ENCODE measurements at regions of chr1 and their contacts with region 1.

Region 1: GRCh38 chr1:212035123-212035834 is at the starts of genes DTL and INTS7:
- DNase-seq: peak; percentile 100
- ATAC-seq: peak; percentile 87
- H3K4me3 Mint-ChIP-seq: peak within 1 kb of the TSS; percentile 98
- H3K27ac Mint-ChIP-seq: peak within 1 kb of the TSS; percentile 99
- H3K4me1 Mint-ChIP-seq: peaks cover 56% of the 10 kb centered on the region
- H3K27me3 Mint-ChIP-seq: no peaks in the 10 kb centered on the region
- total RNA-seq, gene DTL: 74.1 to 77.5 TPM
- total RNA-seq, gene INTS7: 31.8 to 32.1 TPM

Region 2: GRCh38 chr1:211680752-211681327 is 354.4 kb before region 1 on chr1:
- CTCF ChIA-PET with region 1: interaction called, 114 read pairs
- POLR2A ChIA-PET with region 1: interaction called, 15 read pairs
- DNase-seq: peak; percentile 85
- ATAC-seq: peak; percentile 90
- H3K4me3 Mint-ChIP-seq: no peak overlapping the region
- H3K27ac Mint-ChIP-seq: peak overlapping the region; percentile 11
- H3K4me1 Mint-ChIP-seq: peaks cover 13% of the 10 kb centered on the region
- H3K27me3 Mint-ChIP-seq: peaks cover 3% of the 10 kb centered on the region

Region 3: GRCh38 chr1:211732293-211732980 is 302.8 kb before region 1 on chr1:
- CTCF ChIA-PET with region 1: no interaction called
- POLR2A ChIA-PET with region 1: no interaction called
- DNase-seq: no peak
- ATAC-seq: no peak
- H3K4me3 Mint-ChIP-seq: no peak overlapping the region
- H3K27ac Mint-ChIP-seq: peak overlapping the region; percentile 0
- H3K4me1 Mint-ChIP-seq: peaks cover 4% of the 10 kb centered on the region
- H3K27me3 Mint-ChIP-seq: no peaks in the 10 kb centered on the region

Region 4: DNA sequence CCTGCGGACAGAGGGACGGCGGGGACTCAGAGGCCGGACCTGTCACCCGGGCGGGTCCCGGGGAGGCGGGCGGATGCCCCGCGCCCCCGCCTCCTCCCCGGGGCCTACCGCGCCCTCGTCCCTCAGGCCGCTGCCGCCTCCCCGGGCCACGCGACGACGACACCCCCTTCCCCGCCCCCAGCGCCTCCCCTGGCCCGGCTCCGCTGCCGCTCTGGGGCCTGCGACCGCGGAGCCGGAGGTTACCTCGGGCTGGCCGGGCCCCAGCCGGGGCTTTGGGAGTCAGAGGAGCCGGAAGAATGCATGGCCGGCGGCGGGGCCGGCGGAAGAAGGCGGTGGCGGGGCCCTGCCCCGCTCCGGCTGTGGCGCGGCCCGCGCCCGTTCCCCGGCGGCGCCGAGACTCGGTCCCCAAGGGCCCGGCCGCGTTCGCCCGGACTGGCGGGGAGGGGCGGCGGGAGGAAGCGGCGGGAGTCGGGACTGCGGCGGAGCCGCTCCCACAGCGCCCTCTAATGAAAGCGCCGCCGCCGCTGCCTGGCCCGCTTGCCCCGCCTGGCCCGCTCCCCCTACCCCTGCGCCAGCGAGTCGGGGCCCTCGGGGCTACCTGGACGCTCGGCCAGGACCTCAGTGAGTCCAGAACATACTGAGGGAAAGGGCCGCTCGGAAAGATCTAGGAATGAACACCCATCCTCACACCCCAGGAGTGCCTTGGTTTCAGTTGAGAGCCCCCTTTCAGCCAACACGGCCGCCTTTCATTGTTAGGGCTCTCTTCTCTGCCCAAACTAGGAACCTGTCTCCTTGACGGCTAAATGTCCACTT is 204.7 kb before region 1 on chr1 and contains the start of gene LPGAT1:
- CTCF ChIA-PET with region 1: interaction called, 10 read pairs
- POLR2A ChIA-PET with region 1: interaction called, 3 read pairs
- DNase-seq: peak; percentile 74
- ATAC-seq: peak; percentile 74
- H3K4me3 Mint-ChIP-seq: peak within 1 kb of the TSS; percentile 88
- H3K27ac Mint-ChIP-seq: peak within 1 kb of the TSS; percentile 89
- H3K4me1 Mint-ChIP-seq: peaks cover 69% of the 10 kb centered on the region
- H3K27me3 Mint-ChIP-seq: no peaks in the 10 kb centered on the region
- total RNA-seq, gene LPGAT1: 59.3 to 60.5 TPM

Region 5: GRCh38 chr1:212021563-212021962 is 13.7 kb before region 1 on chr1:
- CTCF ChIA-PET with region 1: interaction called, 24 read pairs
- POLR2A ChIA-PET with region 1: interaction called, 7 read pairs
- DNase-seq: no peak
- ATAC-seq: no peak
- H3K4me3 Mint-ChIP-seq: no peak overlapping the region
- H3K27ac Mint-ChIP-seq: no peak overlapping the region
- H3K4me1 Mint-ChIP-seq: no peaks in the 10 kb centered on the region
- H3K27me3 Mint-ChIP-seq: no peaks in the 10 kb centered on the region

Region 6: DNA sequence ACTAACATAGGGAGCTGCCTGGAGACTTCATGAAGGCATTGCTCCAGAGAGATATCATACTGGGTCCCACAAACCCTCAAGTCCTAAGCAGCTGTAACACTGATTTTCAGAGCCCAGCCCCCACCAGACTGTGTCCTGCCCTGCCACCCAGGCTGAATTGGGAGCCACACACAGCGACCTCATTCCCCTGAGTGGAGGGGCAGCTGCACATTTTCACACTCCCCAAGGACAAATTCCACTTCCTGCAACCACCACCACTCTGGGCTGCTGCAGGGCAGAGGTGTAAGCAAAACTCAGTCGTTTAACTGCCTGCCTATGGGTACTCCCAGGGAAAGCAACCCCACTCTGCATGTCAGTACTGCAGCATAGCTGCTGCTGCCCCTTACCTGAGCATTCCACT is 20.1 kb after region 1 on chr1:
- CTCF ChIA-PET with region 1: interaction called, 15 read pairs
- POLR2A ChIA-PET with region 1: interaction called, 4 read pairs
- DNase-seq: no peak
- ATAC-seq: no peak
- H3K4me3 Mint-ChIP-seq: no peak overlapping the region
- H3K27ac Mint-ChIP-seq: no peak overlapping the region
- H3K4me1 Mint-ChIP-seq: peaks cover 15% of the 10 kb centered on the region
- H3K27me3 Mint-ChIP-seq: no peaks in the 10 kb centered on the region

Region 7: DNA sequence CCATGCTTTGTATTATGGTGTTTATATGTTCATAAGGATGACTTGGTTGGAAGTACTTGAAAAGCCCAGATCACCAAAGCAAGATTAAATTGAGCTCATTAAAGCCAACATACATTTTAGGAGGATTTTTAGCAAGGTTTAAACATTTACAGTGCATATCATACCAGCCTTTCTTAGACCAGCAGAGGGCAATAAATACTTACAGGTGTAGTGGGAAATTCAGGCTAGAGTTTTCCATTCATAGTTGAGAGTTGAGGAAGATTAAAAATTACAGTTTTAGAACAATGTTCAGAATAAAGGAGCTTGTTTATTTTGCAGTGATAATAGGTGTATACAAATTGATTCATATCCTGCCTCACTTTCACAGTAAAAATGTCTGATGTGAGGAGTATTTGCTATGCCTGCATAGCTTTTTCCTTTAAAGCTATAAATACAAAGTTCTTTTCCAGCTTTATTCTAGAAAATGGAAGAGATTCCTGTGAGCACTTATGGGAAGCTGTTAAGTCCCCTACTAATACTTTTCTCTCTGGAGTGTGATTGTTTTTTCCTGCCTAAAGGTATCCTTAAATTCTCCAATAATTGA is 35.5 kb after region 1 on chr1:
- CTCF ChIA-PET with region 1: interaction called, 26 read pairs
- POLR2A ChIA-PET with region 1: no interaction called
- DNase-seq: no peak
- ATAC-seq: peak; percentile 63
- H3K4me3 Mint-ChIP-seq: no peak overlapping the region
- H3K27ac Mint-ChIP-seq: no peak overlapping the region
- H3K4me1 Mint-ChIP-seq: no peaks in the 10 kb centered on the region
- H3K27me3 Mint-ChIP-seq: no peaks in the 10 kb centered on the region

Region 8: DNA sequence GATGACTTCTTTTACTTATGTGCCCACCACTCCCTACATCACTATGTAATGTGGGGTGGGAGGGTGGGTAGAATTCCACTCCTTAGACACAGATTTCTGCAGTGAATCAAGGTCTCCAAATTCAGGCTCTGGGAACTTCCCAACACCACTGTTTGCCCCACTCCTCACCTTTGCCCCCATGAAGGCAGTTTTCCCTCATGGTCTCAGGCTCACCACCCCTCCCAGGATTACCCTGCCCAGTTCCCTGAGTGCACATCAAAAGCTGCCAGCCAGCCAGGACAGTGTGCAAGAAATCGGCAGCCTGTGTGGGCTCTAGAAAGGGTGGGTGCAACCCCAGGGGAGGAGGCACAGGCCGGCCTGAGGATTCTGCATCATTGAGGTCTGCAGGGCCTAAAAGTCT is 412.2 kb after region 1 on chr1:
- CTCF ChIA-PET with region 1: no interaction called
- POLR2A ChIA-PET with region 1: no interaction called
- DNase-seq: no peak
- ATAC-seq: no peak
- H3K4me3 Mint-ChIP-seq: no peak overlapping the region
- H3K27ac Mint-ChIP-seq: no peak overlapping the region
- H3K4me1 Mint-ChIP-seq: no peaks in the 10 kb centered on the region
- H3K27me3 Mint-ChIP-seq: no peaks in the 10 kb centered on the region